Activated CD8-positive, alpha-beta T cell treated with anti-CD3 and anti-CD28 coated beads for 36 hours (primary cell): ENCODE measurements at regions of chr16 and their contacts with region 1.

Region 1: DNA sequence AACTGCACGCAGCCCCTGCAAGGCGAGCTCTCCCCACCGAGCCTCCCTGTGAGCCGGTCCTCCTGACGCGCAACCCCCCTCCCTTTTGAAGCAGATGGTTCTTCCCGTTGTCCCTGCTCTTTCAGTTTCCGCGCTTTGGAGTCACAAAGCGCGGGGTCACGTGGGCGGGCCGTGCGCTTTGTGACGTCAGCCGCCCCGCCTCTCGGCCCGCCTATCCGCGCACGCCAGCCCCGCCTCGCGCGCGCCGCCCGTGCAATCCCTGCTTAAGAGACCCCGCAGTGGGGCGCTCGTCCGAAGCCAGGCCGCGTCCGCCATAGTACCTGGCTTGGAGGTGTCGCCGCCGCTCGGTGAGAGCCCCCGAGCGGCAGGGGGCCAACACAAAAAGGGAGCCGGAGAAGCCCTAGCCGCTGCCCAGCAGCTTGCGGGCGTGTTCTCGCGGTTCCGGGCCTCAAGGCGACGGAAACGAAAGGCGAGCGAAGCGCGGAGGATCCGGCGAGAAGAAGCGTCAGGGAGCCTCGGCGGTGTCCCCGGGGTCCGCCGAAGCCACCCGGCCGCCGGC is at the start of gene RBBP6:
- DNase-seq: peak; percentile 94
- ATAC-seq: peak; percentile 90
- H3K4me3 Mint-ChIP-seq: peak within 1 kb of the TSS; percentile 86
- H3K27ac Mint-ChIP-seq: peak within 1 kb of the TSS; percentile 100
- H3K4me1 Mint-ChIP-seq: peaks cover 30% of the 10 kb centered on the region
- H3K27me3 Mint-ChIP-seq: no peaks in the 10 kb centered on the region
- CTCF ChIP-seq: no peak
- total RNA-seq, gene RBBP6: 71.6 to 74.8 TPM

Region 2: GRCh38 chr16:24116989-24117388 is 422.4 kb before region 1 on chr16:
- CTCF ChIA-PET with region 1: no interaction called
- POLR2A ChIA-PET with region 1: no interaction called
- intact Hi-C with region 1: no loop called
- DNase-seq: no peak
- ATAC-seq: no peak
- H3K4me3 Mint-ChIP-seq: no peak overlapping the region
- H3K27ac Mint-ChIP-seq: no peak overlapping the region
- H3K4me1 Mint-ChIP-seq: no peaks in the 10 kb centered on the region
- H3K27me3 Mint-ChIP-seq: no peaks in the 10 kb centered on the region
- CTCF ChIP-seq: no peak

Region 3: DNA sequence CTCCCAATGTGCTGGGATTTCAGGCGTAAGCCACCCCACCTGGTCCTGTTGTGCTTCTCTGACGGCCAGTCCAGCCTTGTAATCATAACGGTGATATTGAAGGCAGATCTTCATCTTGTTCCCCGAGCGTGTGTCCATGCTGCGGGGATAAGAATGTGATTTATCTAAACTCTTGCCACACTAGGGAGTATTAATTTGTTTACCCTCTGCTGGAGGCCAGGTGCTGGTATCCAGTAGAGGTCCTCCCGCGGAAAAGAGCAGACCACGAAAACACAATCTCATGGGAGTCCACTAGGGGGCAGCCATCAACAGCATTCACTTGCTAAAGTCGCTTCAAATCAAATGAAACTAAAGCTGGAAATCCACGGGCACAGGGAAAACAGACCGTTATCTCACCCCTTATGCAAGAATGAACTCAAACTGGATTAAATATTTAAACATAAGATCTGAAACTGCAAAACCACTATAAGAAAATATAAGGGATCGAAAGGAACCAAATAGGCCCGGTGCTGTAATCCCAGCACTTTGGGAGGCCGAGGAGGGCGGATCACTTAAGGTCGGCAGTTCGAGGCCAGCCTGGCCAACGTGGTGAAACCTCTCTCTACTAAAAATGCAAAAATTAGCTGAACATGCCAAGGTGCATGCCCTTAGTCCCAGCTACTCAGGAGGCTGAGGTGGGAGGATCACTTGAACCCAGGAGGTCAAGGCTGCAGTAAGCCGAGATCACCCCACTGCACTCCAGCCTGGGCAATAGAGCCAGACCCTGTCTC is 22.3 kb before region 1 on chr16:
- CTCF ChIA-PET with region 1: interaction called, 20 read pairs
- POLR2A ChIA-PET with region 1: interaction called, 4 read pairs
- intact Hi-C with region 1: no loop called
- DNase-seq: peak; percentile 87
- ATAC-seq: peak; percentile 79
- H3K4me3 Mint-ChIP-seq: peak overlapping the region; percentile 38
- H3K27ac Mint-ChIP-seq: no peak overlapping the region
- H3K4me1 Mint-ChIP-seq: peaks cover 7% of the 10 kb centered on the region
- H3K27me3 Mint-ChIP-seq: peaks cover 2% of the 10 kb centered on the region
- CTCF ChIP-seq: peak; percentile 96

Region 4: DNA sequence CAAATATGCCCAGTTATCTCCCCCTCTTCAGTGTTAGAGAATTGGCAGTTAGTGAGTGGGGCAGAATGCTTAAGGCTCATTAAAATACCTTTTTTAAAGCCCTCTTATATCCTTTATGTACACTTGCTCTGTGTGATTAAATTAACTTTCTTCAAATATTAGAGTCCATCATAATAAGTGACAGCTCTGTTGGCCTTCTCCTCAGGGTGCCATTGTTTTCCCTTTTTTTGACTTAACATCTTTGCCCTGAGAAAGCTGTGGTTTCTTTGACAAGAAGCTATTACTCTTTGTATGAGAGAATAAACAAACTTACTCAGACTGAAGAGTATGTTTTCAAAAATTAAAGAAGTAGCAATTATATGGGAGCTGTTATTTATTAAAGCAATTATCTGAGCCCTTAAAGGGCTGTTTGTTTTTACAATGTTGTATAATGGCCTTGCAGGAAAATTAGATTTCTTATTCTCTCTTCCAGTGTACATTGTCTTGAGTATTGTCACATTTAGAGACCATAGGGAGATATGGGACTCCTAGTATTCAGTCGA is 13.4 kb after region 1 on chr16:
- CTCF ChIA-PET with region 1: interaction called, 5 read pairs
- POLR2A ChIA-PET with region 1: interaction called, 11 read pairs
- intact Hi-C with region 1: no loop called
- DNase-seq: no peak
- ATAC-seq: no peak
- H3K4me3 Mint-ChIP-seq: no peak overlapping the region
- H3K27ac Mint-ChIP-seq: no peak overlapping the region
- H3K4me1 Mint-ChIP-seq: peaks cover 31% of the 10 kb centered on the region
- H3K27me3 Mint-ChIP-seq: no peaks in the 10 kb centered on the region
- CTCF ChIP-seq: no peak